SK-N-SH (cell line): ENCODE measurements at regions of chr2 and their contacts with region 1.

Region 1: DNA sequence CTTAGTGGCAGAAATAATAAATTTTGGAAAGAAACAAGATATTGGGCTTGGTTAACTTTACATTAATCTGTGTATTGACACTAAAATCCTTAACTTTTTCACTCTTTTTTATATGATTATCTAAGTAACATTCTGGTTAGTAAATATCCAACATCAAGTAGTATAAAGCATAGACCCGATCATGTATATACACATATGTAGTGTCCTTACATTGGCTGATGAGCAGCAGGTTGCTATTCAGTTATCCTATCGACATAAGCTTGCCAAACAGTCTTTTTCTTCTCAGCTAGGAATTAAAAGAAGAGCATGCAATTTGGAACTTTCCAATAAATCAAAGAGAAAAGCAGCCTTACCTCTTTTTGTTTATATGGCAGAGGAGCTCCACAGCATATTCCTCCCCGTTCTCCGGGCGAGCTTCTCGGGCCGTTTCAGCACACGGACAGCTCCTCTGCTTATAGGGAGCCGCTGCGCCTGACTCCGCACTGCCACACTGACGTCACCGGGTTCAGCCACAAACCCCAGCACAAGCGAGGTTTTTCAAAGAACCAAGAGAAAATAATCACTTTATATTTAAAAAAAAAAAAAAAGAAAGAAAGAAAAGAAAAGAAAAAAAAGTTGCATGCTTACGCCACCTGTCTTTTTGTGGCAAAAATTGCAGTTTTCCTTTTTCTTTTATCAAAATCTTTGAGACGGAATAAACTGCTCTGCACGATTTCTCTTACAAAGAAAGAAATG is at the start of gene SCG2:
- DNase-seq: peak; percentile 80
- H3K4me3 ChIP-seq: peak within 1 kb of the TSS; percentile 66 to 74
- H3K27ac ChIP-seq: peak within 1 kb of the TSS; percentile 94 to 95
- H3K4me1 ChIP-seq: peaks cover 22 to 26% of the 10 kb centered on the region in 2 experiments
- H3K27me3 ChIP-seq: no peaks in the 10 kb centered on the region
- CTCF ChIP-seq: peak; percentile 60
- EP300 ChIP-seq: no peak; a peak in 1 of 4 replicates
- RAD21 ChIP-seq: peak; percentile 65
- polyA plus RNA-seq, gene SCG2: 373 and 509 TPM in 2 replicates

Region 2: GRCh38 chr2:223459328-223459939 is 142.7 kb before region 1 on chr2:
- CTCF ChIA-PET with region 1: interaction called, 17 read pairs
- POLR2A ChIA-PET with region 1: no interaction called
- DNase-seq: peak; percentile 12
- H3K4me3 ChIP-seq: no peak overlapping the region
- H3K27ac ChIP-seq: peak overlapping the region; percentile 34 to 88; a peak in 3 of 4 replicates
- H3K4me1 ChIP-seq: peaks cover 8 to 22% of the 10 kb centered on the region in 2 experiments
- H3K27me3 ChIP-seq: no peaks in the 10 kb centered on the region
- CTCF ChIP-seq: peak; percentile 69
- EP300 ChIP-seq: no peak
- RAD21 ChIP-seq: peak; percentile 62